A673 (cell line): ENCODE measurements at regions of chr5 and their contacts with region 1.

Region 1: GRCh38 chr5:177351385-177352329 is at the start of gene LMAN2:
- DNase-seq: peak; percentile 94
- H3K4me3 ChIP-seq: peak within 1 kb of the TSS; percentile 88
- H3K27ac ChIP-seq: peak within 1 kb of the TSS; percentile 95
- H3K4me1 ChIP-seq: peaks cover 8% of the 10 kb centered on the region
- H3K27me3 ChIP-seq: no peaks in the 10 kb centered on the region
- CTCF ChIP-seq: no peak
- total RNA-seq, gene LMAN2: 97.7 and 98.4 TPM in 2 replicates

Region 2: GRCh38 chr5:177425801-177426565 is 74.3 kb after region 1 on chr5:
- CTCF ChIA-PET with region 1: no interaction called
- POLR2A ChIA-PET with region 1: interaction called, 13 read pairs
- intact Hi-C with region 1: no loop called
- DNase-seq: peak; percentile 100
- H3K4me3 ChIP-seq: peak overlapping the region; percentile 61
- H3K27ac ChIP-seq: peak overlapping the region; percentile 76
- H3K4me1 ChIP-seq: peaks cover 13% of the 10 kb centered on the region
- H3K27me3 ChIP-seq: no peaks in the 10 kb centered on the region
- CTCF ChIP-seq: no peak